Psoas muscle (tissue), 8 donors: ENCODE measurements at regions of chr16 and their contacts with region 1.

Region 1: GRCh38 chr16:2784951-2785635 is 2.3 kb downstream of the PRSS33 start:
- DNase-seq: no peak
- ATAC-seq: peak; percentile 40 to 44 (median 40)
- H3K4me3 ChIP-seq: peak overlapping the region; percentile 59
- H3K27ac ChIP-seq: no peak overlapping the region
- H3K4me1 ChIP-seq: no peaks in the 10 kb centered on the region
- H3K27me3 ChIP-seq: peaks cover 0 to 39% (median 18%) of the 10 kb centered on the region in 3 donors
- CTCF ChIP-seq: no peak

Region 2: DNA sequence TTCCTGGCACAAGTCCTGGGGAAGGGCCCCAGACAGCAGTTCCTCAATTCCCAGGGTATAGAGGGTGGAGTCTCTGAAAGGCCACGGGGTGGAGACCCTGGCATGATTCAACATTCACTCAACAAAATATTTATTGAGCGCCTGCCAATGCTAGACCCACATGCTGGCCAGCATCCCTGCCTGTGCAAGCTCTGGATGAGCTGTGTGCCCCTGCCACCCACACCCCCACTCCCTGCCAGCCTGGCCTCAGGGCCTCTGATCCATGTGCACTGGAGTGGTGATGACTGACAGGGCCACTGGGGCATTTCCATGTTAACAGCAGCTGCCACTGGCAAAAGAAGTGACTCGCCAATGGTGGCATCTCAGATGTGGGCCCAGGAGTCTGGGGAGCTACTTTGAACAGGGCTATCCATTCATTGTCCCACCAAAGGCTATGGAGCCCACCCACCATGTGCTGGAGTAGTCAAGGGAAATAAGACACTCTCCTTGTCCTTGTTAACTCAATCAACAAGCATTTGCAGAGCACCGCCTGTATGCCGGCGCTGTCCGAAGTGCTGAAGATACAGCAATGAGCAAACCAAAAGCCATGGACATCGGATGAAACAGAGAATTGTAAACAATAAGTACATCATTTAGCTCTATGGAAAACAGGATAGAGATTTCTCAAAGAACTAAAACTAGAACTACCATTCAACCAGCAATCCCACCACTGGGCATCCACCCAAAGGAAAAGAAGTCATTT is 75.9 kb after region 1 on chr16:
- intact Hi-C with region 1: loop called in 1 of 2 experiments (anchors 5 kb)
- DNase-seq: peak in 1 of 2 donors; percentile 45
- ATAC-seq: no peak
- H3K4me3 ChIP-seq: no peak overlapping the region
- H3K27ac ChIP-seq: no peak overlapping the region
- H3K4me1 ChIP-seq: no peaks in the 10 kb centered on the region
- H3K27me3 ChIP-seq: peaks cover 0 to 41% (median 19%) of the 10 kb centered on the region in 3 donors
- CTCF ChIP-seq: no peak